BJ (cell line): ENCODE measurements at regions of chr3 and their contacts with region 1.

Region 1: DNA sequence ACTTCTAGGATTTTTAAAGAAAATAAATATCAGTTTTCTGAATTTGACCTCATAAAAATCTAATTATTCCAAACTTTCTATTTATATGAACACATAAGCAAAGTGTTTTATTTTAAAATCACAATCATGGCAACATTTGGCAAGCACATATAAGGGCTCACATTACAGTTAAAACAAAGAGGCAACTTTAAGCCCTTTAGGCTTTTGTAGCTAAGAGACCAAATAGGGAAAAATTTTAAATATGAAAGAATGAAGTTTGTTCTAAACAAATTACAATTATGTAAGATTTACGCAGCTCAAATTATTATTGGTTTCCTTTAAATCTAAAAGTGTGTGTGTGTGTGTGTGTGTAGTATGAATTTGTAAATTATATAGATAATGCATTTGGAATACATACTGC is 267.0 kb downstream of the ZIC4 start:
- DNase-seq: no peak
- H3K4me3 ChIP-seq: no peak overlapping the region
- H3K27me3 ChIP-seq: no peaks in the 10 kb centered on the region
- CTCF ChIP-seq: no peak

Region 2: GRCh38 chr3:147483578-147483977 is 344.2 kb after region 1 on chr3:
- CTCF ChIA-PET with region 1: no interaction called
- POLR2A ChIA-PET with region 1: interaction called, 10 read pairs
- DNase-seq: no peak
- H3K4me3 ChIP-seq: no peak overlapping the region
- H3K27me3 ChIP-seq: no peaks in the 10 kb centered on the region
- CTCF ChIP-seq: no peak